Activated CD8-positive, alpha-beta T cell treated with anti-CD3 and anti-CD28 coated beads for 36 hours (primary cell): ENCODE measurements at regions of chr4 and their contacts with region 1.

Region 1: GRCh38 chr4:6873792-6874461 is 35.7 kb upstream of the TBC1D14 start:
- DNase-seq: peak; percentile 90
- ATAC-seq: peak; percentile 94
- H3K4me3 Mint-ChIP-seq: no peak overlapping the region
- H3K27ac Mint-ChIP-seq: peak overlapping the region; percentile 46
- H3K4me1 Mint-ChIP-seq: no peaks in the 10 kb centered on the region
- H3K27me3 Mint-ChIP-seq: no peaks in the 10 kb centered on the region
- CTCF ChIP-seq: peak; percentile 87

Region 2: GRCh38 chr4:6716018-6716911 is 157.7 kb before region 1 on chr4 and contains the start of gene BLOC1S4:
- CTCF ChIA-PET with region 1: interaction called, 205 read pairs
- POLR2A ChIA-PET with region 1: interaction called, 15 read pairs
- intact Hi-C with region 1: loop called (anchors 1 kb)
- DNase-seq: peak; percentile 91
- ATAC-seq: peak; percentile 82
- H3K4me3 Mint-ChIP-seq: peak within 1 kb of the TSS; percentile 90
- H3K27ac Mint-ChIP-seq: peak within 1 kb of the TSS; percentile 92
- H3K4me1 Mint-ChIP-seq: peaks cover 31% of the 10 kb centered on the region
- H3K27me3 Mint-ChIP-seq: no peaks in the 10 kb centered on the region
- CTCF ChIP-seq: no peak
- total RNA-seq, gene BLOC1S4: 19.1 to 21.8 TPM

Region 3: GRCh38 chr4:6733358-6734164 is 140.4 kb before region 1 on chr4:
- CTCF ChIA-PET with region 1: interaction called, 10 read pairs
- POLR2A ChIA-PET with region 1: interaction called, 3 read pairs
- intact Hi-C with region 1: no loop called
- DNase-seq: no peak
- ATAC-seq: no peak
- H3K4me3 Mint-ChIP-seq: no peak overlapping the region
- H3K27ac Mint-ChIP-seq: no peak overlapping the region
- H3K4me1 Mint-ChIP-seq: no peaks in the 10 kb centered on the region
- H3K27me3 Mint-ChIP-seq: no peaks in the 10 kb centered on the region
- CTCF ChIP-seq: no peak

Region 4: DNA sequence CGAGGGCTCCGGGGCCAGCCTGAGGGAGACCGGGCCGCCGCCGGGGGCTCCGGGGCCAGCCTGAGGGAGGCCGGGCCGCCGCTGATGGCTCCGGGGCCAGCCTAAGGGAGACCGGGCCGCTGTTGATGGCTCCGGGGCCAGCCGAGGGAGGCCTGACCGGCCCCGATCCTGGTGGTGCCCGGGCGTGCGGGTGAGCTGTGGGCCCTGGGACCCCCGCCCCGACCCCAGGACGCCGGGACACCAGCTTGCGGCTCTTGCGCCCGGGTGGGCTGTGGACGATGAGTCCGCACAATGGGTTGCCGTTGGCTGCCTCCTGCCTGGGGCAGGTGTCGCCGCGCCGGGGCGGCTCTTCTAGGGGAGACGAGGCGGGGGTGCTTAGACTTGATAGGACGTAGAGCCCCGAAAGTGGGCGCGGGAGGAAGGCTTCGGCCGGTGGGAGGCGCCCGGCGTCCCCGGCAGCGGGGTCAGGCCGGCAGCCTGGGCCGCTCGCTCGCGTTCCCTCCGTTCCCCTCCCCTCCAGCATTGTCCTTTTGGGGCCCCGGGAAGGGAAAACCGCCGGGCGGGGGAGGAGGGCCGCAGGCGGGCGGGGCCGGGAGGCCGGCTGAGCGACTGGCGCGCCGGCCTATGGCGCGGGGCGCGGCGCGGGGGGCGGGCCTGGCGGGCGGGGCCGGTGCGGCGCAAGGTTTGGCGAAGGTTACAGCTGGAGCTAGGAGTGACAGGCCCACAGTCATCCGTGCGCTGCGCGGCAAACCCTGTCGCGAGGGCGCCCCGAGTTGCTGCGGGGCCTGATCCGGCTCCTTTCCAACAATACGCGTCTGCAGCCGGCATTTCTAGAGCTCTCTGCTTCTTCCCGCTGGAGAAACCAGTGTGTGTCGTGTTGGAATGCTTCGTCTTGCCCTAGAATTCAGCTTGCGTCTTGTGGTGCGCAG is 90.6 kb before region 1 on chr4:
- CTCF ChIA-PET with region 1: interaction called, 19 read pairs
- POLR2A ChIA-PET with region 1: interaction called, 4 read pairs
- intact Hi-C with region 1: loop called (anchors 5 kb)
- DNase-seq: peak; percentile 89
- ATAC-seq: peak; percentile 75
- H3K4me3 Mint-ChIP-seq: peak overlapping the region; percentile 84
- H3K27ac Mint-ChIP-seq: peak overlapping the region; percentile 76
- H3K4me1 Mint-ChIP-seq: peaks cover 68% of the 10 kb centered on the region
- H3K27me3 Mint-ChIP-seq: no peaks in the 10 kb centered on the region
- CTCF ChIP-seq: no peak

Region 5: GRCh38 chr4:6825403-6825802 is 48.5 kb before region 1 on chr4:
- CTCF ChIA-PET with region 1: interaction called, 13 read pairs
- POLR2A ChIA-PET with region 1: no interaction called
- intact Hi-C with region 1: no loop called
- DNase-seq: peak; percentile 9
- ATAC-seq: peak; percentile 78
- H3K4me3 Mint-ChIP-seq: no peak overlapping the region
- H3K27ac Mint-ChIP-seq: peak overlapping the region; percentile 70
- H3K4me1 Mint-ChIP-seq: peaks cover 41% of the 10 kb centered on the region
- H3K27me3 Mint-ChIP-seq: no peaks in the 10 kb centered on the region
- CTCF ChIP-seq: no peak

Region 6: DNA sequence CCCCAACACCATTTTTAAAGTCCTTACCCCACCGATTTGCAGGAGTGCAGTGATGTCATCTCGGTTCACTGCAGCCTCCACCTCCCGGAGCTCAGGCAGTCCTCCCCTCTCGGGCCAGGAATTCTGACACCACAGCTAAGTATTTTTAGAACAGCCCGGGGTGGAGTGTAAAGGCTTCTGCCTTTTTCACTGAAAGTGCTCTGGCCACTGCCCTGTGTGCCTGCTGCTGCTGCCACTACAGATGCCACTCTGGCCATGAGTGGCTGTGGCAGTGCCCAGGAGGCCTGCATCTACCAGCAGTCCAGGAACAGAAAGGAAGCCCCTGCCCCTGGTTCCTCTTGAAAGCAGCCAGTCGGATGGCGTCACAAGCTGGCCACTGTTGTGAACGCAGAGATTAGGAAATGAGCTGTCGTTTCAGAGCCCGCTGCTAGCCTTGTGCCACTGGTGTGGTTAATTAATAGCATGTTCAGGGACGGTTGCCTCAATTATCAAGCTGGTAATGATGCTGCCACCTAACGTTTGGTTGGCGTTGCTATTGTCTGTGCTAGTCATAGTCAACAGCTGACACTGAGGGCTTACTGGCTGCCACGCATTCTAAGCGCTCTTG is 12.1 kb after region 1 on chr4:
- CTCF ChIA-PET with region 1: interaction called, 58 read pairs
- POLR2A ChIA-PET with region 1: interaction called, 3 read pairs
- intact Hi-C with region 1: no loop called
- DNase-seq: peak; percentile 48
- ATAC-seq: peak; percentile 78
- H3K4me3 Mint-ChIP-seq: no peak overlapping the region
- H3K27ac Mint-ChIP-seq: no peak overlapping the region
- H3K4me1 Mint-ChIP-seq: peaks cover 2% of the 10 kb centered on the region
- H3K27me3 Mint-ChIP-seq: no peaks in the 10 kb centered on the region
- CTCF ChIP-seq: peak; percentile 33

Region 7: GRCh38 chr4:7238300-7238960 is 364.5 kb after region 1 on chr4:
- CTCF ChIA-PET with region 1: no interaction called
- POLR2A ChIA-PET with region 1: no interaction called
- intact Hi-C with region 1: no loop called
- DNase-seq: peak; percentile 27
- ATAC-seq: no peak
- H3K4me3 Mint-ChIP-seq: no peak overlapping the region
- H3K27ac Mint-ChIP-seq: no peak overlapping the region
- H3K4me1 Mint-ChIP-seq: no peaks in the 10 kb centered on the region
- H3K27me3 Mint-ChIP-seq: no peaks in the 10 kb centered on the region
- CTCF ChIP-seq: no peak